GM18951 (cell line): ENCODE measurements at regions of chr20 and their contacts with region 1.

Region 1: GRCh38 chr20:59455402-59456341 is 148.7 kb upstream of the PHACTR3 start:
- POLR2A ChIP-seq: no peak

Region 2: DNA sequence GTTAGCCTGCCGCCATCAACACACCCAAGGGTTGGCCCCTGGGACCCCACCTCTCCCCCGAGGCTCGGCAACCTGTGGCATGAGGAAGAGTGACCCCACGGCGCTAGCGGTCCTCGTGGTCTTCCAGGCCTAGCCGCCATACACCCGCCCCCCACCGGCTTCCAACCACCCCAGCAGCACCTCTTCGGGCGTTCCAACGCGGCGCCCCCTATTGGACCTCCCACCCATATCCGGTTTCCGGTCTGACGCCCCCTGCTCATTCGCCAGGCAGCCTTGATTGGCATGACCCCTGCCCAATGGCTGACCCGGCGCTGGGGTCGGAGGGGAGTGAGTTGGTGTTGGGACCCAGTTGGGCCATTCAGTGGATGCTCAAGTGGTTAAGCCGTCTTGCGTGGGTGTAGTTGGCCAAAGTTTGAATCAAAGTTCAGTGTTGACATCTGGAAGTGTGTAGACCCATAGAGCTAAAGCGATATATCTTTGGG is 604.9 kb before region 1 on chr20 and contains the start of gene GNAS-AS1:
- in situ Hi-C with region 1: loop called (anchors 25 kb)
- POLR2A ChIP-seq: peak; percentile 68

Region 3: GRCh38 chr20:59184880-59185447 is 270.7 kb before region 1 on chr20:
- in situ Hi-C with region 1: no loop called
- POLR2A ChIP-seq: no peak

Region 4: DNA sequence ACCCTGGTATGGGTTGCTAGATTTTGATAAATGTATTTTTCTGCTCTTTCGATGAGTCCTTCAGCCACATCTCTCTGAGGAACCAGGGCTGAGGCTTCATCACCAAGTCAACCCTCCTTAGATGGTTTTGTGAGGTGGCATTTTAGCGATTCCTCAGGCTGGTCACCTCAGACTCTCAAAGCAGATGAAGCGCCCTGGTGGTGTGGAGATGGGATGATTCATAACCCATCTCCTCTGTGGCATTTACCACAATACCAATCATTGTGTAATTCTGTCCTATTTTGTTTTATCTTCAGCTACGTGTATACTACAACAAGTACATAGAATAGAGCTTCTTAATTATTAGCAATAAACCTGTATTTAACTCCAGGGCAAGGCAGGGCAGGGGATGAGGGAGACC is 213.0 kb before region 1 on chr20:
- in situ Hi-C with region 1: no loop called
- POLR2A ChIP-seq: no peak